MCF 10A (cell line): ENCODE measurements at regions of chrX and their contacts with region 1.

Region 1: DNA sequence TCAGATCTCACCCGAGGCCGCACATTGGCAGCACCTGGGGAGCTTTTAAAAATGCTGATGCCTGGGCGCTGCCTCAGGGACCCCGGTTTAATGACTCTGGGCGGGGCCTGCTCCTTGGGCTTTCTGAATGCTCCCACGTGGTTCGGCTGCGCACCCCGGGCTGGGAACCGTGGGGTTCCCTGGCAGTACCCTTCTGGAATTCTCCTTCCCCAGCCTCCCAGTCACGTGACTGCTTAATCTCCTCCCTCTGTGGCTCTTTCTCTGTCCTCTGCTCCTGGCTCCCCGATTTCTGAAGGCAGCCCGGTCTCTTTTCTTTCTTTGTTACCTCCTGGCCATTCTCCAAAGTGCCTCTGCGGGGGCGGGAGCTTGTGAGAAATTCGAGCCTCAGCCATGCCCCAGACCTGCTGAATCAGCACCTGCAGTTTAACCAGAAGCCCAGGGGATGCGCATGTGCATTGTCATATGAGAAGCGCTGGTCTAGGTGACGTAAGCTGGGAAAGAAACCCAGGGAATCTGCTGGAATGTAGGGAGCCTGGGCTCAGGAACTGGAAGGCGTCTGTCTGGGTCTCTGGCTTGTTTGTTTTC is 16.6 kb downstream of the CLCN4 start:
- DNase-seq: peak; percentile 97
- H3K4me3 Mint-ChIP-seq: peak overlapping the region; percentile 61
- H3K27ac Mint-ChIP-seq: peak overlapping the region; percentile 20
- H3K4me1 Mint-ChIP-seq: peaks cover 32% of the 10 kb centered on the region
- H3K27me3 Mint-ChIP-seq: peaks cover 24% of the 10 kb centered on the region
- CTCF ChIP-seq: no peak

Region 2: DNA sequence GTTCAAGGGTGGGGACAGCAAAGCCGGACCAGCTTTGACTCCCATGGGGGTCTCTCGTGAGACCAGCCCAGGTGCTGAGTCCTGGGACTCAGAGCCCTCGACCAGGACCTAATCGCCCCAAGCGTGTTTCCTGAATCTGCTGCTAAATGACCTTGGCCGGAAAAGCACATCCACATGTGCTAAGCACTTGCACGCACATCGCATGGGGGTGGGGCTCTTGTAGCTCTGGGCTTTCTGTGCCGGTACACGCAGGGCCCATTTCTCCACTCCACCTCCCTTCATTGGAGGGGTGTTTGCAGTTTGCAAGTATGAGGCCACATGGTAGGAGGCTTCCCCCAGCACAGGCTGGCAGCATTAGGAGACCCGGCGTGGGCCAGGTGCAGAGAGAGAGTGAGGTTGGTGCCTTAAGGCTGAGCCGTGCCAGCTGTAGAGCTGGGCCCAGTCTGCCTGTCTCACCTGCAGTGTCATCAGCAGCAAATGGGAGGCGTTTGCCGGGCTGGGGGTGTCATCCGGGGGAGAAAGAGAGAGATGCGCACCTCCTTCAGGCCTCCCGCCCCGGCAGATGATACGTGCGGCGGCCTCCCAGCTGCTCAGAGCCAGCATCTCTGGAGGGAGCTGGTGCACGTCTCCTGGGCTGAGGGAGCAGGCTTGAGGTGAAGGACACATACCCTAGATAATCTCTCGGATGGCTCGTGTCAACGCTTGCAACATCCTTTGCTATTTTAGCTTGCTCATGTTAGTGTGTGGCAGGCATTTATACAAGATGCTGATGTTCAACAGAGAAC is 61.9 kb before region 1 on chrX:
- CTCF ChIA-PET with region 1: no interaction called
- POLR2A ChIA-PET with region 1: no interaction called
- intact Hi-C with region 1: no loop called
- DNase-seq: no peak
- H3K4me3 Mint-ChIP-seq: no peak overlapping the region
- H3K27ac Mint-ChIP-seq: no peak overlapping the region
- H3K4me1 Mint-ChIP-seq: peaks cover 6% of the 10 kb centered on the region
- H3K27me3 Mint-ChIP-seq: no peaks in the 10 kb centered on the region
- CTCF ChIP-seq: no peak

Region 3: GRCh38 chrX:10156199-10157031 is 17.0 kb before region 1 on chrX and contains the start of gene CLCN4:
- CTCF ChIA-PET with region 1: interaction called, 3 read pairs
- POLR2A ChIA-PET with region 1: interaction called, 12 read pairs
- intact Hi-C with region 1: no loop called
- DNase-seq: peak; percentile 73
- H3K4me3 Mint-ChIP-seq: peak within 1 kb of the TSS; percentile 74
- H3K27ac Mint-ChIP-seq: peak within 1 kb of the TSS; percentile 65
- H3K4me1 Mint-ChIP-seq: peaks cover 7% of the 10 kb centered on the region
- H3K27me3 Mint-ChIP-seq: peaks cover 15% of the 10 kb centered on the region
- CTCF ChIP-seq: no peak
- total RNA-seq, gene CLCN4: 7.3 and 9.3 TPM in 2 replicates